ENCODE measurements at regions of chr3 and their contacts with region 1.

Region 1: DNA sequence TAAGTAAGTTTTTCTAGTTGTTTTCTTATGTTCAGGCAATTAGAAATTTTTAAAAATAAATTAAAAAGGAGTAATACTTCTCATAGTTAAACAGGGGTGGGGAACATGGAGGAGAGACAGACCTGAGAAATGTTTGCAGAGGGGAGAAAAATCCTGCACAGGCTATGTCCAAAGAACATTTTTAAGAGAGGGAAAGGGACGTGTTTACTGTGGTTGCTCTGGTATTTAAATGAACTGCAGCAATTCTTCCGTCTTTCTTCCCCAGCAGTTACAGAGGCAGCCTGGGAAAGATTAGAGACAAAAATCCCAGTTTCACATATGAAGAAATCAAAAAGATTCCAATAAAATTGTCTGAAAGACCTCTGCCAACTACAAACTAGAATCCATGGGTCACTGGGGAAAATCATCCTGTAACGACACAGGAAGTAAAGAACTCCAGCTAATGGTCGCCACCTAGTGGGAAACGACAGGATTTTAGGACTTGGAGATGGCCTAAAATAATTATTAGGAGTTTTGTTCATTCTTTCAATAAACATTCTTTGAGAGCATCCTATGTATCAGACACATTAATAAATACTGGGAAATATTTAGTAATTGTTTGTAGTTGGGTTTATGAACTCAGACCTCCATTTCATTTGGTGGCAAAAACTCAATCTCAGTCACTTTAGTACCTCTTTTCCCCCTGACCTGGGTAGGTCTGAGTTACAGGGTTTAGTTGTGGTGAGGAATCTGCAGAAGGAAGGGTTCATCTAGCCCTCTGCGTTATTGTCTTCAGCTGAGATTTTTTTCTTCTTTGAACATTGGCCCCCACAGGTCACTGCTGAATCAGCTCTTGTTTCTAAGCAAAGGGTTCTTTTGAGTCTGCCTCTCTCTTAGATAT is 69.9 kb upstream of the GOLIM4 start:
- DNase-seq: peak; percentile 65
- ATAC-seq: peak; percentile 90
- H3K4me3 ChIP-seq: no peak overlapping the region
- H3K27ac ChIP-seq: no peak overlapping the region
- H3K4me1 ChIP-seq: no peaks in the 10 kb centered on the region
- H3K27me3 ChIP-seq: no peaks in the 10 kb centered on the region
- CTCF ChIP-seq: peak; percentile 54 to 97 (median 77)
- POLR2A ChIP-seq: no peak
- RAD21 ChIP-seq: peak; percentile 89

Region 2: DNA sequence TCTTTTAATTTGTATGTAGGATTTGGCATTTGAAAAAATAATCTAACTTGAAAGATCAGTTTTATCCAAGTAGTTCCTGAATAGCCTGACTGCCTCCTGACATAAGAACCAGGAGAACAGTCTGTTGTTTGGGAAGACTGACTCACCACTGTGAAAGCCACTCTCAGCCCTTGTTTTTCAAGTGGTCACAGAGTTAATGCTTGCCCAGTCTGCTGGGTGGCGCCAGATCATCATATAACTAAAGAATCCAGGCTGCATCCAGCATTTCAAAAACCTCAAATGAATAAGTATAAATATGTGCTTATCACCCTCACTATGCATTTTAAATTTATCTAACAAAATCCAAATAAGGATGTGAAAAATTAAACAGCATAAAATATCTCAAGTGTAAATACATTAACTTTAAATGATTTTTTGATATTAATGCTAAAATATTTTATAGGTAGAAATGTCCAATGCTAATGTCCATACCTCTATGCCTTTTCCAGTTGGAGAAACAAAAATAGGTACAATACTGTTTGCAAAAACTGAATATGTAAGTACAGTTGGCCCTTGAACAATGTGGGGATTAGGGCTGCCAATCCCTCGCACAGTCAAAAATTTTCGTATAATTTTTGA is 758.6 kb before region 1 on chr3:
- CTCF ChIA-PET with region 1: no interaction called
- POLR2A ChIA-PET with region 1: no interaction called
- RAD21 ChIA-PET with region 1: no interaction called
- intact Hi-C with region 1: loop called (anchors 10 kb)
- DNase-seq: peak; percentile 58
- ATAC-seq: peak; percentile 99
- H3K4me3 ChIP-seq: no peak overlapping the region
- H3K27ac ChIP-seq: no peak overlapping the region
- H3K4me1 ChIP-seq: no peaks in the 10 kb centered on the region
- H3K27me3 ChIP-seq: no peaks in the 10 kb centered on the region
- CTCF ChIP-seq: peak; percentile 58 to 81 (median 79)
- POLR2A ChIP-seq: no peak
- RAD21 ChIP-seq: peak; percentile 88

Region 3: DNA sequence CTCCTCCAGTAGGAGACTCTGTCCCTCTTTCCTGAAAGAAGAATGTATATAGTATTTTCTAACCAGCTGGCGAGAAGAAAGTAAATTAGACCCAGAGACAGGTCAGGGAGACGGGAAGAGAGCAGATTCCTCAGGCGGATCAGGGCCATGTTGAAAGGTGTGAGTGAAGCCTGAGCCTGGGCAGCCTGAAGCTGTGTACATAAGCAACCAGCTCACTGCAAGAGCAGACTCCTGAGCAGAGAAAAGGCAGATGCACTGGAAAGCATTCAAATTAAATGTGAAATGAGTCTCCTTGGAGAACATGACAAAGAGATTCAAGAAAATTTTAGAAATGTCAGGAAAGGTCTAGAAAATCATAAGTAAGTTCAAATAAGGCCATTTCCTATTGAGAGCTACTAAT is 235.7 kb before region 1 on chr3:
- CTCF ChIA-PET with region 1: no interaction called
- POLR2A ChIA-PET with region 1: no interaction called
- RAD21 ChIA-PET with region 1: no interaction called
- intact Hi-C with region 1: loop called (anchors 10 kb)
- DNase-seq: no peak
- ATAC-seq: no peak
- H3K4me3 ChIP-seq: no peak overlapping the region
- H3K27ac ChIP-seq: no peak overlapping the region
- H3K4me1 ChIP-seq: no peaks in the 10 kb centered on the region
- H3K27me3 ChIP-seq: no peaks in the 10 kb centered on the region
- CTCF ChIP-seq: no peak
- POLR2A ChIP-seq: no peak
- RAD21 ChIP-seq: no peak

Region 4: DNA sequence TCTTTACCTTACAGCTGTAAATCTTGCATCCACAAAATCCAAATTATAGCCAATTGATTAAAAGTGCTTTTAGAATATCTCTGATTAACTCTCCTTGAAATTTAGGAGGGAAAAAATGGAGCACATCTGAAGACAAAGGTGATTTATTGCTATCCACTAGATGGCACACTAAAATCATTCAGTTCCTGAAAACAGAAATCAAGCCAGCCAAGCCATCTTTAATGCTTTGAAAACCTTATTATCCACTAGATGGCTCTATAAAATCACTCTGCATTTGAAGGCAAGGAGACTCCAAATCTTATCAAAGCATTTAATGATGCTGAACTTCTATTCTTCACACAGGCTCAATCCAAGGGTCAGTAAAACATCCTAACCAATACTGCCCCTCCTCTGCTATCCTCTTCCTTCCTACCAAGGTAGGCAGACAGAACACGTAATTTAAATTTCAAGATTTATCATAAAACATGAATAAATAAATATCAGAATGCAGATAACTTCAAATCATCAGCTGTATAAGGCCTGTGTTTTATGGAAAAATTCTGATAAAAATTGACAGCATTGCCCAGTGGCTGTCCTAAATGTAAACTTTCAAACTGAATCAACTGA is 118.3 kb before region 1 on chr3:
- CTCF ChIA-PET with region 1: interaction called, 47 read pairs
- POLR2A ChIA-PET with region 1: no interaction called
- RAD21 ChIA-PET with region 1: no interaction called
- intact Hi-C with region 1: loop called (anchors 1 kb)
- DNase-seq: peak; percentile 79
- ATAC-seq: peak; percentile 84
- H3K4me3 ChIP-seq: no peak overlapping the region
- H3K27ac ChIP-seq: no peak overlapping the region
- H3K4me1 ChIP-seq: no peaks in the 10 kb centered on the region
- H3K27me3 ChIP-seq: no peaks in the 10 kb centered on the region
- CTCF ChIP-seq: peak; percentile 68 to 99 (median 89)
- POLR2A ChIP-seq: no peak
- RAD21 ChIP-seq: peak; percentile 97

Measured in HCT116 (cell line).